Activated CD4-positive, alpha-beta memory T cell treated with anti-CD3 and anti-CD28 coated beads for 36 hours (primary cell): ENCODE measurements at regions of chr7 and their contacts with region 1.

Region 1: GRCh38 chr7:157299613-157300368 is 37.0 kb upstream of the DNAJB6 start:
- DNase-seq: peak; percentile 44
- H3K4me3 Mint-ChIP-seq: no peak overlapping the region
- H3K27ac Mint-ChIP-seq: peak overlapping the region; percentile 68
- H3K4me1 Mint-ChIP-seq: peaks cover 39% of the 10 kb centered on the region
- H3K27me3 Mint-ChIP-seq: no peaks in the 10 kb centered on the region

Region 2: GRCh38 chr7:156918635-156919034 is 381.2 kb before region 1 on chr7:
- CTCF ChIA-PET with region 1: no interaction called
- POLR2A ChIA-PET with region 1: no interaction called
- intact Hi-C with region 1: loop called (anchors 1 kb)
- DNase-seq: no peak
- H3K4me3 Mint-ChIP-seq: no peak overlapping the region
- H3K27ac Mint-ChIP-seq: peak overlapping the region; percentile 71
- H3K4me1 Mint-ChIP-seq: peaks cover 42% of the 10 kb centered on the region
- H3K27me3 Mint-ChIP-seq: peaks cover 39% of the 10 kb centered on the region

Region 3: DNA sequence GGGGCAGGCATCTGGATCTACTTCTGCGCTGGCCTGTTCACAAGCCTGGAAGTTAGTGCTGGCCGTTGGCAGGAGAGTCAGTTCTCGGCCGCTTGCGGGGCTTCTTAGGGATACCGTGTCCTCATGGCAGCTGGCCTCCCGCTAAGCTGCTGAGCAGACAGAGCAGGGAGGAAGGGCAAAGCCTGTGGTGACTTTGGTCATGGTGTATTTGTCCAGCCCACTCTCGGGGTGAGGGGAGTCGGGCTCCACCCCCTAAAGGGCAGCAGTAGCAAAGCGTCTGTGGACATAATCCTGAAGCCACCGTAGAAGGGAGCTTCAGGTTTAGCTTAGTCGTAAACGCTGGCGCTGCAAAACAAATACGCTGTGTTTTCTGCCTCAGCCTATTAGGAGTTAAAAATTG is 148.9 kb before region 1 on chr7:
- CTCF ChIA-PET with region 1: no interaction called
- POLR2A ChIA-PET with region 1: no interaction called
- intact Hi-C with region 1: no loop called
- DNase-seq: no peak
- H3K4me3 Mint-ChIP-seq: no peak overlapping the region
- H3K27ac Mint-ChIP-seq: no peak overlapping the region
- H3K4me1 Mint-ChIP-seq: peaks cover 58% of the 10 kb centered on the region
- H3K27me3 Mint-ChIP-seq: no peaks in the 10 kb centered on the region

Region 4: GRCh38 chr7:157401567-157402142 is 101.9 kb after region 1 on chr7:
- CTCF ChIA-PET with region 1: no interaction called
- POLR2A ChIA-PET with region 1: no interaction called
- intact Hi-C with region 1: no loop called
- DNase-seq: no peak
- H3K4me3 Mint-ChIP-seq: no peak overlapping the region
- H3K27ac Mint-ChIP-seq: no peak overlapping the region
- H3K4me1 Mint-ChIP-seq: peaks cover 16% of the 10 kb centered on the region
- H3K27me3 Mint-ChIP-seq: no peaks in the 10 kb centered on the region

Region 5: DNA sequence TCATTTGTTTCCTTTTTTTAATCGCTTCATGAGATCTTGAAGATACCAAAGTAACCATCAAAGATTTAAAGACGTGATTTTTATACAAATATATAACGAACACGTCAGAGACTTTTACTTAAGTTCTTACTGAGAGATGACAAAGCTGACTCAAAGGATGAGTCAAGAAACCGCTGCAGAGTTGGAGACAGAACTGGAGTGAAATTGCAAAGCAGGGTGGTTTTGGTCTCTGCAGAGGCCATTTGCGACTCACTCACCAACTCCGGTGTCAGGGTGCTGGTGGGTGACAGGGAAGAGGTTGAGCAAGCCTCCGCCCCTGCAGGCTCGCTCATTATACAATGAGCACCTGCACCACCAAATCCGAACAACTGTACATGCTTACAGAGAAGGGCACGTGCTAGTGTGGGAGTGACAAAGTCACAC is 112.2 kb after region 1 on chr7:
- CTCF ChIA-PET with region 1: no interaction called
- POLR2A ChIA-PET with region 1: no interaction called
- intact Hi-C with region 1: loop called (anchors 2 kb)
- DNase-seq: peak; percentile 87
- H3K4me3 Mint-ChIP-seq: peak overlapping the region; percentile 44
- H3K27ac Mint-ChIP-seq: peak overlapping the region; percentile 85
- H3K4me1 Mint-ChIP-seq: peaks cover 22% of the 10 kb centered on the region
- H3K27me3 Mint-ChIP-seq: no peaks in the 10 kb centered on the region